ENCODE measurements at regions of chr9 and their contacts with region 1.

Region 1: GRCh38 chr9:93154315-93154903 is 20.4 kb upstream of the NINJ1 start:
- DNase-seq: no peak
- H3K4me3 ChIP-seq: no peak overlapping the region
- H3K27ac ChIP-seq: no peak overlapping the region
- H3K4me1 ChIP-seq: no peaks in the 10 kb centered on the region
- H3K27me3 ChIP-seq: no peaks in the 10 kb centered on the region
- CTCF ChIP-seq: no peak
- EP300 ChIP-seq: no peak
- POLR2A ChIP-seq: no peak

Region 2: DNA sequence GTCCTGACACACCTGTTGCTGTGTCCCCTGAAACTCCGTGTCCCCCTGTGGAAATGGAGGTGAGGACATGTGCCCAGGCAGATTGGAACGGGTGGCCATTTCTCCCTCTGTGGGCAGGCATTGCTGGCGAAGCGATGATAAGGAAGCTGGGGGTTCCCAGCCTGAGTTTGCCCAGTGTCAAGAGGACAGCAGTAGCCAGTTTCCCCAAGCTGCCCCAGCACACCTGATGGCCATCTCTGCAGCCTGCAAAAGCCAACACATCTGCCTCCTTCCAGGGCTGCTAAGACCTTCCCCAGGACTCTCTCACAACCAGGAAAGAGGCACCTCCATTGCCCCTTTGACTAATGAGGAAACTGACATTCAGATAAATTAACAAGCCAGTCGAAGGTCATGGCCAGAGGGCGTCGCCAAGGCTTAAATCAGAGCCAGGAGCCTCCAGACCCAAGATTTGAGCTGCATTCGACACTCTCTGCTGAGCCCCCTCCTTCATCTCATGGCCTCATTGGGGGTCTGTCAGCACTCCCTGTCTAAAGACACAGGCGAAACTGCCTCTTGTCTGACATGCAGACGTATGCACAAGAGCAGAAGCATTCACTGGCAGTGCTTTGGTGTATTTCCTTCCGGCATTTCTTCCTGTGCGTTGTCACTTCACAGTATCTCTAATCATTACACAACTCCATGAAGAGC is 19.1 kb after region 1 on chr9:
- intact Hi-C with region 1: loop called in 1 of 4 experiments (anchors 1 kb)
- DNase-seq: no peak
- H3K4me3 ChIP-seq: no peak overlapping the region
- H3K27ac ChIP-seq: no peak overlapping the region
- H3K4me1 ChIP-seq: no peaks in the 10 kb centered on the region
- H3K27me3 ChIP-seq: no peaks in the 10 kb centered on the region
- CTCF ChIP-seq: no peak
- EP300 ChIP-seq: no peak
- POLR2A ChIP-seq: no peak

Region 3: GRCh38 chr9:93319992-93320500 is 165.6 kb after region 1 on chr9:
- intact Hi-C with region 1: no loop called
- DNase-seq: no peak
- H3K4me3 ChIP-seq: no peak overlapping the region
- H3K27ac ChIP-seq: no peak overlapping the region
- H3K4me1 ChIP-seq: no peaks in the 10 kb centered on the region
- H3K27me3 ChIP-seq: no peaks in the 10 kb centered on the region
- CTCF ChIP-seq: no peak
- EP300 ChIP-seq: no peak
- POLR2A ChIP-seq: no peak

Region 4: GRCh38 chr9:95055851-95056551 is 1901.6 kb after region 1 on chr9:
- intact Hi-C with region 1: no loop called
- DNase-seq: no peak
- H3K4me3 ChIP-seq: peak overlapping the region; percentile 18
- H3K27ac ChIP-seq: no peak overlapping the region
- H3K4me1 ChIP-seq: peaks cover 30% of the 10 kb centered on the region
- H3K27me3 ChIP-seq: no peaks in the 10 kb centered on the region
- CTCF ChIP-seq: no peak
- EP300 ChIP-seq: no peak
- POLR2A ChIP-seq: no peak